ENCODE measurements at regions of chr4 and their contacts with region 1.

Region 1: GRCh38 chr4:47704693-47705325 is 133.1 kb downstream of the CORIN start:
- DNase-seq: peak in 1 of 2 experiments; percentile 19
- H3K4me3 ChIP-seq: no peak overlapping the region
- H3K27ac ChIP-seq: no peak overlapping the region
- H3K4me1 ChIP-seq: no peaks in the 10 kb centered on the region
- H3K27me3 ChIP-seq: no peaks in the 10 kb centered on the region
- CTCF ChIP-seq: peak; percentile 71 to 86 (median 83)
- EP300 ChIP-seq: no peak
- POLR2A ChIP-seq: no peak
- RAD21 ChIP-seq: peak; percentile 89 to 91

Region 2: DNA sequence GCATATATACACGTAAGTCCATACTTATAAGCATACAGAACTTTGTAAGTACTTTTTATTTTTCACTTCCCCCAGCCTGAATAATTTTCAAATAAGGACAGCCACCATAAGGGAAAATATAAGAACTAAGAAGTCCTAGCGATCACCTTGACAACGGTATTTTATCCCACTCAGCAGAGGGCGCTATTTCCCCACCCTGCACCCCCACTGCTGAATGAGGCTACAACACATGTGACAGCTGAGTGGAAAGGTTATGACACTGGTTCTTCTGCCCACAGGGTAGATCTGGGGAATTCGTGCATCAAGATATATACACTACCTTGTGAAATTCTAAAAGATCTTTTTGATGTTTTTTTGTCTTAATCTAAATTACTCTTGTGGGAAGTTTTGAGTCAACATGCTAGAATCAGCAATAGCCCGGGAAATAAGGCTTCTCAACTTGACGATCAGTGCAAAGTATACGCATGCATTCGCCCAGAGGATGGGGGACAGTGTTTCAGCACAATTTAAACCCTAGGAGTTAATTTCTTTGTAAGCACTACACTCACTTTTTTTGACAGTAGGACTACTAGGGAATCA is 18.4 kb before region 1 on chr4:
- CTCF ChIA-PET with region 1: interaction called, 15 read pairs
- POLR2A ChIA-PET with region 1: no interaction called
- DNase-seq: peak; percentile 19 to 82
- H3K4me3 ChIP-seq: no peak overlapping the region
- H3K27ac ChIP-seq: no peak overlapping the region
- H3K4me1 ChIP-seq: no peaks in the 10 kb centered on the region
- H3K27me3 ChIP-seq: no peaks in the 10 kb centered on the region
- CTCF ChIP-seq: peak; percentile 83 to 84 (median 84)
- EP300 ChIP-seq: no peak
- POLR2A ChIP-seq: no peak
- RAD21 ChIP-seq: peak; percentile 84 to 87

Region 3: DNA sequence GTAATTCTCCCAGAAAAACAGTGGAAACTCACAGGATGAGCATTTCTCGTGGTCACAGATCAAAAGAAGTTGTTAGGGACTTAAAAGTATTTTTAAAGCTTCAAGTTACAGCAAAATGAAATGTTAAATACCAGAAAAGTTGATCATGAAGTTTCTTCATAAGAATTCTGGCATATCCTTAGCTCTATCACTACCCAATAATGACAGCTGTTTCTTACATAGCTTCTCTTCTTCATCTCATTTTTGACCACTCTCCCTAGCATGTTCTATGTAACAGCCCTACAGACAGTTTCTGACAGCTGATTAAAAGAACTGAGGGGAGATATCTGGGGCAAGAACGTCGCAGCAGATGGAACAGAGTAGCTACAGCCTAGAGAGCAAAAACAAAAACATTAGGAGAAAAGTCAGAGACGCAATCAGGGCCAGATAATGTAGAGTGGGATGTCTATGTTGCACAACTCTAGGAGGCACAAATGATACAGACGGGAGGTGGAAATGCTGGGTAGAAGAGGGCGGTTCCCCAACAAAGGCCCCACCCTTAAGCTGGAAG is 24.4 kb after region 1 on chr4:
- CTCF ChIA-PET with region 1: interaction called, 15 read pairs
- POLR2A ChIA-PET with region 1: no interaction called
- DNase-seq: no peak
- H3K4me3 ChIP-seq: no peak overlapping the region
- H3K27ac ChIP-seq: no peak overlapping the region
- H3K4me1 ChIP-seq: no peaks in the 10 kb centered on the region
- H3K27me3 ChIP-seq: no peaks in the 10 kb centered on the region
- CTCF ChIP-seq: no peak
- EP300 ChIP-seq: no peak
- POLR2A ChIP-seq: no peak
- RAD21 ChIP-seq: no peak

Region 4: GRCh38 chr4:47824840-47825239 is 120.0 kb after region 1 on chr4:
- CTCF ChIA-PET with region 1: interaction called, 12 read pairs
- POLR2A ChIA-PET with region 1: no interaction called
- DNase-seq: no peak
- H3K4me3 ChIP-seq: no peak overlapping the region
- H3K27ac ChIP-seq: no peak overlapping the region
- H3K4me1 ChIP-seq: no peaks in the 10 kb centered on the region
- H3K27me3 ChIP-seq: no peaks in the 10 kb centered on the region
- CTCF ChIP-seq: no peak
- EP300 ChIP-seq: no peak
- POLR2A ChIP-seq: no peak
- RAD21 ChIP-seq: no peak

Region 5: DNA sequence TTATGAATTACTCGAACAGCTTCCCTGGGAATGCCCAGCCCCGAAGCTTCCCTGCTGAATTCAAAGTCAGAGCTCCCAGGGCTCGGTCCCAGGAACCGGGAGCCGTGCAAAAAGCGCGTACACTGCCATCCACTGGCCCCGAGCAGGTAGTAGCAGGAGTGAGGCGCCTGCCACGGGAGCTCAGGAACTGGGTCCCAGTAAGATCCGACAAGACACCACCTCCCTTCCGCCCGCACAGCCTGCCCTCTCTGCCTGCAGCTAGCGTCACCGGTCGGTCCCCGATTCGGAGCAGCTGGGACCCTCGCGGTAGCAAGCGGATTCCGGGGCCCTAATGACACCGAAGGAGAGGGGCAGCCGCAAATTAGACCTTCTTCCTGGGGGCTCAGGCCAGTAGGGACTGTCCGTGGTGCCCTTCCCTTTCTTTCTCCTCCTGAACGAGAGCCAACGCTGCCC is 131.9 kb after region 1 on chr4:
- CTCF ChIA-PET with region 1: interaction called, 282 read pairs
- POLR2A ChIA-PET with region 1: interaction called, 5 read pairs
- DNase-seq: peak in 1 of 2 experiments; percentile 79
- H3K4me3 ChIP-seq: peak overlapping the region; percentile 44 to 71 (median 61)
- H3K27ac ChIP-seq: no peak overlapping the region
- H3K4me1 ChIP-seq: peaks cover 0 to 8% (median 0%) of the 10 kb centered on the region in 4 experiments; a peak in 4 of 7 replicates
- H3K27me3 ChIP-seq: peaks cover 0 to 14% (median 6%) of the 10 kb centered on the region in 4 experiments; a peak in 3 of 7 replicates
- CTCF ChIP-seq: peak; percentile 74 to 87 (median 84)
- EP300 ChIP-seq: no peak
- POLR2A ChIP-seq: no peak
- RAD21 ChIP-seq: peak; percentile 87 to 90

Region 6: DNA sequence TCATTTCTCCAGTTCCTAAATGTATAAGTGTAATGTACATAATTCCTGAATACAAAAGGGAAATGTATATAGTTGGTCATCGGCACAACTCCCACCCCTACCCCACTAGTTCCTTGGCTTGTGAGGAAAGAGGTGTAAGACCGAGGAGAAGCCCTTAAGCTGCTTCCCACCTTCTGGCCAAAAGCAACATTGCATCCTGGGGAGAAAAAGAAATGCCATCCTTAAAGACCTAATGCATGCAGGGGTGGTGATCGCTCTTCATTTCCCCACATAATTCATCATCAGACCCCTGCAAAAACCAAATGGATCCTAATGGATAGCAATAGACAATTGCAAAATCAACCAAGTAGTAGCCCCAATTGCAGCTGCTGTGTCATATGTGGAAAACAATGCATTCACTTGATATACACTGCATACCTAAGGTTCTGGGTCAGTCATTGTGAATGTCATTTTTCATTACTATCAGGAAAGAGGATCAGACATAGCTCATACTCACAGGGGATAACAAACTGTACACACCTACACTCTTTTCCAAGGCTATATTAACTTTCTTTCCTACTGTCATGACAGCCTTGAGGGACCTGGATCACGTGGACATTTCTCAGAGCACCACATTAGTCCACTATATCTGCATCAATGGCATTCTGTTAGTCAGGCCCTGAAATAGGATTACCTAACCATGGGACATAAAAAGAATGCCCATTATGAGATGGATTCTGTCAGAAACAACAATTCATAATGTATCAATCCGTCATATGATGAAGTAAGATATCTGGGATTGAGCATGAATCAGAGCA is 241.3 kb after region 1 on chr4:
- CTCF ChIA-PET with region 1: no interaction called
- POLR2A ChIA-PET with region 1: no interaction called
- DNase-seq: no peak
- H3K4me3 ChIP-seq: no peak overlapping the region
- H3K27ac ChIP-seq: no peak overlapping the region
- H3K4me1 ChIP-seq: peaks cover 0 to 4% (median 1%) of the 10 kb centered on the region in 4 experiments; a peak in 2 of 7 replicates
- H3K27me3 ChIP-seq: no peaks in the 10 kb centered on the region
- CTCF ChIP-seq: peak in 1 of 3 experiments; percentile 50; a peak in 1 of 4 replicates
- EP300 ChIP-seq: no peak
- POLR2A ChIP-seq: no peak
- RAD21 ChIP-seq: 0 out of 4 replicates have a peak, but pooled peaks of 1 of the 2 experiments have one; percentile 4

Measured in H1 (cell line).